ENCODE measurements at regions of chr6 and their contacts with region 1.

Region 1: DNA sequence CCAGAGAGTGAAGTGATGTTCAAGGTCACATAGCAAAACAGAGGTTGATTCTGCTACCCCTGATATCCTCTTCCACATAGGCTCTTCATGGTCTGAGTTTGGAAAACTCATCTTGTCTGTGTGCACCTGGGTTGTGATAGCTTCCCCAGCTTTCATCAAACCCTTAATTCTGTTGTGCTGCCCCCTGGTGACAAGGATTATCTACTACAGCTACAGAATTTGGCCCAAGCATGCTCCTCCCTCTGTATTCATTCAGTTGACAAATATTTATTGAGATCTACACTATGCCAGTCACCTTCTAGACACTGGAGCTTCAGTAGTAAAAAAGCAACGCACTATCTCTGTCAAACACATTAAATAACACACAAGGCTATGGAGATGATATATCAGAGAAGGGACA is 50.4 kb downstream of the SMPDL3A start:
- DNase-seq: no peak
- ATAC-seq: peak; percentile 93
- H3K4me3 ChIP-seq: no peak overlapping the region
- H3K27ac ChIP-seq: no peak overlapping the region
- H3K4me1 ChIP-seq: no peaks in the 10 kb centered on the region
- H3K27me3 ChIP-seq: peaks cover 0 to 3% of the 10 kb centered on the region in 2 experiments; a peak in 1 of 4 replicates
- CTCF ChIP-seq: peak; percentile 59 to 68 (median 64); a peak in 5 of 6 replicates
- EP300 ChIP-seq: no peak
- POLR2A ChIP-seq: no peak
- RAD21 ChIP-seq: peak; percentile 58

Region 2: DNA sequence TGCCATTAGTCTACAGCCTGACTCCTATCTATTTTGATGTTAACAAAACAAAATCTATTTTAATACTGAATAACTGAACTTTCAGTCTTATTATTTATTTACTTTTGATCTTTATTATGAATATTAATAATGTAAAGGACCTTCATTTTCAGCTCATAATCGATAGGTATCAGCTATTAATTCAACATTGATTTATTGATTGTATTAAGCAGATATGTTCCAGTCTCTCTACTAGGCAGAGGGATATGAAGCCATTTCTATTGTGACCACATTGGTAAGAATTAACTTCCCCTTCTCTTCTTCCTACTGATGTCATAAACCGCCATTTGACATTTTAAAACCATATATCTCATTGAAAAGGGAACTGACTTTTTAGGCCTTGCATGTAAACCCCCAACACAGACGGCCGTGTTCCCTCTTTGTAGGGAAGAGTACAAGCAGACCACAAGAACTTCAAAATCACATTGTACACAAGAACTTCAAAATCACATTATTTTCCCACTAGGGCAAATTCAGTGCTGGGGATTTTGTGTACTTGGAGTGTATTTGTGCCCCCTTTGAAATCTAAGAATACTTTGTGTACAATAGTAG is 129.5 kb before region 1 on chr6:
- CTCF ChIA-PET with region 1: interaction called, 5 read pairs
- POLR2A ChIA-PET with region 1: no interaction called
- RAD21 ChIA-PET with region 1: interaction called, 5 read pairs
- SMC1A ChIA-PET with region 1: interaction called, 16 read pairs
- in situ Hi-C with region 1: no loop called
- intact Hi-C with region 1: no loop called
- DNase-seq: peak; percentile 11
- ATAC-seq: peak; percentile 82
- H3K4me3 ChIP-seq: no peak overlapping the region
- H3K27ac ChIP-seq: no peak overlapping the region
- H3K4me1 ChIP-seq: no peaks in the 10 kb centered on the region
- H3K27me3 ChIP-seq: no peaks in the 10 kb centered on the region; a peak in 1 of 4 replicates
- CTCF ChIP-seq: no peak
- EP300 ChIP-seq: peak; percentile 69 to 80; a peak in 3 of 4 replicates
- POLR2A ChIP-seq: no peak
- RAD21 ChIP-seq: no peak

Region 3: DNA sequence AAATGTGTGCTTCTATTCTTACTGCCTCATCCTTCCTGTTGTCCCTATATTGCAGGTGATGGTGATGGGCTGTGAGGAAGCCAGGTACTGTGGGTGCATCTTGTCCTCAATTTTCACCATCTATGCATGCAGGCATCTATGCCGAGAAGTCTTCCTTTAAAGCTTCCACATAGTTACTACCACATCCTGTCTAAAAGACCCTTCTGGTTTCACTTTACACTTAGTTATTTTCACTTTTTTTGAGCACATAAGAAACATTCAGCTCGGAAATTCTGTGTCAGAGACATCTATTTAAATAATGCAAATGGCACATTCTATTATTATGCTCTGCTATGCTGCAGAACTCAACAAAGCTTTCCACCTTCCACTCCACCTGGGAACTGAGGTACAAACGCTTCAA is 88.2 kb before region 1 on chr6:
- CTCF ChIA-PET with region 1: interaction called, 640 read pairs
- POLR2A ChIA-PET with region 1: interaction called, 3 read pairs
- RAD21 ChIA-PET with region 1: interaction called, 103 read pairs
- SMC1A ChIA-PET with region 1: interaction called, 177 read pairs
- in situ Hi-C with region 1: loop called (anchors 5 kb)
- intact Hi-C with region 1: no loop called
- DNase-seq: no peak
- ATAC-seq: peak; percentile 75
- H3K4me3 ChIP-seq: no peak overlapping the region
- H3K27ac ChIP-seq: no peak overlapping the region
- H3K4me1 ChIP-seq: 0 out of 2 replicates have a peak, but pooled peaks cover 3% of the 10 kb centered on the region
- H3K27me3 ChIP-seq: no peaks in the 10 kb centered on the region
- CTCF ChIP-seq: no peak
- EP300 ChIP-seq: no peak
- POLR2A ChIP-seq: no peak
- RAD21 ChIP-seq: no peak

Region 4: DNA sequence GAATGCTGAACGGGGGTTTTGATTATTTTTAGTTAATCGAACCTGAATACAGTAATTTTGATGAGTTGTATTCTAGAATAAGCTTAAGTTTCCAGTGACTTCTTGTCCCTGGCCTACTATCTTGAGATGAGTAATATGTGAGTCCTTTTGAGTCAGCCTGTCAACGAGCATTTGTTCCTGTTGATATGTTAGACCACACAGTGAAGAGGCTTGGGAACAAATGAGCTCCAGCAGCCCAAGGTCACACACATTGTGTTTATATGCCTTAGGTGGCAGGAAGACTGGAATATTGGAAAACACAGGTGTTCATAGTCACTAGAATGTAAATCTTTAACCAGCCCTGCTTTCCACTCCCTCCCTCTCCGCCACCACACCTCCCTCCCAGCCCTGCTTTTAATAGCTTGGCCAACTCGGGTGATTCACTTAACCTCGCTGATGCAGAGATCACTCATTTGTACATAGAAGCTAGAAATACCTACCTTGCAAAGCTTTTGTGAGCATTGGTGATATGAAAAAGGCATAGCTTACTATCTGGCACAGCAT is 41.3 kb before region 1 on chr6:
- CTCF ChIA-PET with region 1: interaction called, 59 read pairs
- POLR2A ChIA-PET with region 1: interaction called, 3 read pairs
- RAD21 ChIA-PET with region 1: interaction called, 23 read pairs
- SMC1A ChIA-PET with region 1: interaction called, 14 read pairs
- in situ Hi-C with region 1: no loop called
- intact Hi-C with region 1: no loop called
- DNase-seq: no peak
- ATAC-seq: peak; percentile 93
- H3K4me3 ChIP-seq: no peak overlapping the region
- H3K27ac ChIP-seq: no peak overlapping the region
- H3K4me1 ChIP-seq: no peaks in the 10 kb centered on the region
- H3K27me3 ChIP-seq: no peaks in the 10 kb centered on the region
- CTCF ChIP-seq: no peak
- EP300 ChIP-seq: peak in 1 of 2 experiments; percentile 14; a peak in 2 of 4 replicates
- POLR2A ChIP-seq: no peak
- RAD21 ChIP-seq: no peak

Region 5: GRCh38 chr6:122825158-122825557 is 14.3 kb before region 1 on chr6:
- CTCF ChIA-PET with region 1: interaction called, 21 read pairs
- POLR2A ChIA-PET with region 1: no interaction called
- RAD21 ChIA-PET with region 1: no interaction called
- SMC1A ChIA-PET with region 1: interaction called, 15 read pairs
- in situ Hi-C with region 1: no loop called
- intact Hi-C with region 1: no loop called
- DNase-seq: no peak
- ATAC-seq: no peak
- H3K4me3 ChIP-seq: no peak overlapping the region
- H3K27ac ChIP-seq: no peak overlapping the region
- H3K4me1 ChIP-seq: no peaks in the 10 kb centered on the region
- H3K27me3 ChIP-seq: no peaks in the 10 kb centered on the region; a peak in 1 of 4 replicates
- CTCF ChIP-seq: no peak
- EP300 ChIP-seq: no peak
- POLR2A ChIP-seq: no peak
- RAD21 ChIP-seq: no peak